Motor neuron (in vitro differentiated cells): ENCODE measurements at regions of chr2 and their contacts with region 1.

Region 1: DNA sequence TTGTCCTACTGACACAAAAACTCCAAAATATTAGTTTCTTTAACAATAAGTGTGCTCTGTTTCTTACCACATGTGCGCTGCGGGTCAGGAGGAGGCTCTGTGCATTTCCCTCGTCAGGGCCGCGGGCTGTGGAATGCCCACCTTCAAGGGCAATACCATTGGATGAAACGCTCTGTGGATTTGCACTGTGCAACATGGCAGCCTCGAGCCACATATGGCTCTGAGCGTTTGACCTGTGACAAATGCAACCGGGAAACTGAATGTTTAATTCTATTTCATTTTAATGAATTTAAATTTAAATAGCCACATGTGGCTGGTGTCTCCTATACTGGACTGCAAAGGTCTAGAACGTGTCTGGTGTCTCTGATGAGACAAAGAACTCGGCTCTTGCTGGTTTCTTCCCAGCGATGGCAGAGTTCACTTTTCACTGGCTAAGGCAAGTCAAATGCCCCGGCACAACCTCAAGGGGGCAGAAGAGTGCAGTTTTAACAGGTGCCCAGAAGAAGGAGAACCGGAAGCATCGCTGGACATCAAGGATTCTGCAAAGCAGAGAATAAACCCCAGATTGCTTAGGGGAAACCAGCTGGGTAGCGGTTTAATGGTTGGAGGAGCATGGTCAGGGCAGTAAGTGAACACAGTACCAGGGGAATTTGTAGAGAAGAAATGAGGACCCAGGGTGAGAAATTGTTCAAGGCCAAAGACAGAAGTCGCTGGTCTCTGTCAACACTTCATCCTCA is 37.0 kb upstream of the TMEM18 start:
- ATAC-seq: peak in 5 of 8 experiments; percentile 50 to 96 (median 77)
- H3K4me3 ChIP-seq: no peak overlapping the region
- H3K27ac ChIP-seq: no peak overlapping the region
- H3K4me1 ChIP-seq: peaks cover 0 to 4% of the 10 kb centered on the region in 2 donors

Region 2: DNA sequence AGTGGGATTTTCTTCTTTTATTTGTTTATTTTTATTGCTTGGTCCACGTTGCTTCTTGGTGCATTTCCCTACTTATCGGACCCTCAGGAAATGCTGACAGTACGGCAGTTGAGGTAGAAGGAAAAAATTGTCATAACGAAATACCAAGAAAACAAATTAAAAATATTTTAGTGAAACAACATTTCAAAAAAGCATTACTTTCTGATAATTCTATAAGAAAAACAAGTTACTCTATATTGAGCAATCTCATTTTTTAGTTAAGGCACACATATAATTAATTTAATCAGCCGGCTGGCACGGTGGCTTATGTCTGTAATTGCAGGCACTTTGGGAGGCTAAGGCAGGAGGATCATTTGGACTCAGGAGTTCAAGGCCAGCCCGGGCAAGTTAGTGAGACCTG is 552.4 kb before region 1 on chr2:
- in situ Hi-C with region 1: no loop called
- ATAC-seq: no peak
- H3K4me3 ChIP-seq: no peak overlapping the region
- H3K27ac ChIP-seq: no peak overlapping the region
- H3K4me1 ChIP-seq: peaks cover 0 to 3% of the 10 kb centered on the region in 2 donors

Region 3: DNA sequence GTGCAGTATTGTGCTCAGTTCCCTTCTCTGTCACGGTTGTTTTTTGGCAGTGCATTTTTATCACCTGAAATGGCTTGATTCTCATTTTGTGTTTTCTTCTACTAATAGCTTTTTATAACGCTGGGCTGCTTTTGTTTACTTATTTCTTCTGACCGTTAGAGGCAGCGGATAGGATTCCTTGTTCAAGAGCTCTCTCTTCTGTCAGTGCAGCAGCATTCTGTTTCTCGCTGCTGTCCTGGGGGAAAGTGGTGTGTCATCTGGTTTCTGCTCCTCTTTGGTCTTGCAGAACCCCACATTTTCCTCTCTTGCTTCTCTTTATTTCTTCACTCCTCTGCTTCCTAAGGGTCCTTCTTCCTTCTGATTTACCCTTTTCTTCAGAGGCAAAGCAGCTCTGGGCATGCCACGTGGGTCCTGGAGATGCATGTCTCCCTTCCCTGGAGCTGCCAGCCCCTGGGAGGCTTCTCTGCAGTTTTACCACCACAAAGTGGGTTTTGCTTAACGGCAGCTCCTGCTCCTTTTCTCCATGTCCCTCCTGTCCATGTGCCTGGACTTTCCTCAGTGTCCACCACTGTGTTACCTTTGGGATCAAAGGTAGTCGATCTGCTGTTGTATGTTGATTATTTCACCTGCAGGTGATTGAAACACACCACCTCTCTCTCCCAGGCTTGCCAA is 189.2 kb after region 1 on chr2:
- in situ Hi-C with region 1: loop called in 2 of 9 experiments (anchors 25 kb)
- ATAC-seq: peak in 2 of 8 experiments; percentile 54 to 59
- H3K4me3 ChIP-seq: no peak overlapping the region
- H3K27ac ChIP-seq: no peak overlapping the region
- H3K4me1 ChIP-seq: peaks cover 0 to 10% of the 10 kb centered on the region in 2 donors